Right ventricle myocardium inferior (tissue), 1 donor: ENCODE measurements at regions of chr6 and their contacts with region 1.

Region 1: DNA sequence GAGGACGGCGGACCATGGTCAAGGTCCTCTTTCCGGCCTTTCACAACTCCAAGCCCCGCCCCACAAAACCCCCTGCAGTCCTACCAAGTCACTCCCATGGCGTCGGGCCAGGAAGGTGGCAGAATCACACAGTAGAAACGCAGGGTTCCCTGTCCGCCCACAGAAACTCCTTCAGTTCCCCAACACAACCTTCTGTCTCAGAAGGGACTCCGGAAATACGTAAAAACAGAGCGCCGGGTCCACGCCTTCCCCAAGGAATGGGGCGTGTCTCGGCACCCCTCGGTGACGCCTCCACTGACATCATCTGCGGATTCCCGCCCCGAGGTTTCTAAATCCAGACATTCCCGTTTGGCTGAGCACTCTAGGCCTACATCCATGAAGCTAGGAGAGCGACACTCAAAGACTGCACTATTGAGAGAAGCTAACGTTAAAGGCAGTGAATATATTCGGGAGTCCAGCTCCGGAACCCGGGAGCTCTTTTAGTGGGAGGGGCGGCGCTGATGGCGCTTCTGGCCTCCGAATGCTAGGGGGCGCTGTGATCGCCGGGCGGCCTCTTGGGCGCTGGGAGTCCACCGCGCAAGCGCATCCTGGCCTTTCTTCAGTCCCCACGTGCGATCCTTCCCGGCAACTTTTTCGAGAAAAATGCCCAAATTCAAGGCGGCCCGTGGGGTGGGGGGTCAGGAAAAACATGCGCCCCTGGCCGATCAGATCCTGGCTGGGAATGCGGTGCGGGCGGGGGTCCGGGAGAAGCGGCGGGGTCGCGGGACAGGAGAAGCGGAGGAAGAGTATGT is at the starts of genes BYSL and MED20:
- DNase-seq: peak; percentile 96
- ATAC-seq: peak; percentile 96
- total RNA-seq, gene BYSL: 9.6 TPM
- total RNA-seq, gene MED20: 22.9 TPM

Region 2: DNA sequence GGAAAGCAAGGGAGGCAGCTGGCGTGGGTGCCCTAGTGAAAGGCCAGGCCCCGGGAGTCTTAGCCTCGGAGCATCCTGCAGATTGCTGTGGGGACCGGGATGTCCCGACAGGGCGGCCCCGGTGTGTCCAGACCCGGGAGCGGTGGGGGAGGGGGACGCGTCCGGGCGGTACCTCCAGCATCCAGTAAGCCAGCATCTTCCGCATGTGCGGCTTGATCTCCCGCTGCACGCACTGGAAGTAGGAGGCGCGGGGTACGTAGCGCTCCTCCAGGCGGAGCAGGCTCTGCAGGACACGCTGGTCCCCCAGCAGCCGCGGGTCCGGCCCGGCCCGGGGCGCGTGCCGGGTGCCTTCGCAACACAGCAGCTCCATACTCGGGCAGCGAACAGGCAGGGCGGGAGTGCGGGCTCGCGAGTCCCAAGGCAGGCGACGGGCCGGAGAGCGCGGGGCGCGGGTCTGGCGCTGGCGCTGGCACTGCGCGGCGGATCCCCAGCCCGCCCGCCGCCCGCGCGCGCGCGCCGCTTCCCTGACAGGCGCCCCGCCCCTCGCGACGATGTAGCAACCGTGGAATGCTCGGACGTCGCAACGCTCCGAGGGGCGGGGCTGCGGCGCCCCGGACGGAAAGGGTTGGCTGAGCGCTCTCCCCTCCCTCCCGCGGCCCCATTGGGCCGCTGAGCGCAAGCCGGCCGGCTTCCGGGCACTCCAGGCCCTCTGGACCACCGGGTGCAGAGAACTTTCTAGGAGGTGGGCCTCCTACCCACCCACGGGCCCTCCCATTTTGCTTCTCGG is 20.4 kb after region 1 on chr6 and contains the start of gene CCND3:
- intact Hi-C with region 1: loop called (anchors 2 kb)
- DNase-seq: peak; percentile 98
- ATAC-seq: peak; percentile 95
- total RNA-seq, gene CCND3: 51.5 TPM